Activated CD4-positive, alpha-beta memory T cell treated with anti-CD3 and anti-CD28 coated beads for 36 hours (primary cell): ENCODE measurements at regions of chr10 and their contacts with region 1.

Region 1: GRCh38 chr10:77641788-77642397 is 4.3 kb upstream of the KCNMA1 start:
- DNase-seq: peak; percentile 38
- H3K4me3 Mint-ChIP-seq: no peak overlapping the region
- H3K27ac Mint-ChIP-seq: no peak overlapping the region
- H3K4me1 Mint-ChIP-seq: peaks cover 2% of the 10 kb centered on the region
- H3K27me3 Mint-ChIP-seq: peaks cover 34% of the 10 kb centered on the region

Region 2: DNA sequence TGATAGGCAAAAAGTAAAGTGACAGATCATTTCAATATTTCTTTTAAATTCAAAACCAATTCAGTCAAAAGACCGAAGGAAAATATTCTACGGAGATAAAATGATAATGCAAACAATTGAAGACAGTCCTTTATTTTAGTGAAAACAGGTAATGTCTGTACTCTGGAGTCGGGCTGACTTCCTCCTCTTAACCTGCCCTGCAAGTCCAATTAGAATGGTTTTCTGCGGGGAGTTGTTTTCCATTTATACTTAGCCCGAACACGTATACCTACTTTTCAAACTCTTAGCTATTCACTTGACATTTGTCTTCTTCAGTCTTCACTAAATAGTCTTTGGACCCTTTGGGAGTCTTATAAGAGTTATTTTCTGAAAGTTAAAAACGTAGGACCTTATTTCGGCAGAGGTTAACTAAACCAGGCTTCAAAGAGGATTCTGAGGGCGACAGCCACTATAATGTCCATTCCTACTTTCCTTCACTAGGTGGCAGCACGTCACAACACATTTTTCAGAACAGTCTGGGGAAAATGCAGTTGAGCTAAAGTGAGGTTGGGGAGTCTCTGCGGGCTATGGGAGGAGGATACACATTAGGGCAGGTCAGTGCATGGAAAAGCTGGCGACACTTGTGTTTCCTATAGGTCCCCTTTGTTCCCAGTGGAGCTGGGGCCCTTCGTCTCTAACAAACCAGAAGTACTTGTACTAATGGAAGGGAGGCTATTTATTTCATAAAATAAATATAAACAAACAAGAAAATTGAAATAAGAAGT is 476.3 kb before region 1 on chr10:
- CTCF ChIA-PET with region 1: interaction called, 57 read pairs
- POLR2A ChIA-PET with region 1: no interaction called
- intact Hi-C with region 1: loop called (anchors 1 kb)
- DNase-seq: peak; percentile 50
- H3K4me3 Mint-ChIP-seq: no peak overlapping the region
- H3K27ac Mint-ChIP-seq: no peak overlapping the region
- H3K4me1 Mint-ChIP-seq: peaks cover 3% of the 10 kb centered on the region
- H3K27me3 Mint-ChIP-seq: peaks cover 23% of the 10 kb centered on the region

Region 3: DNA sequence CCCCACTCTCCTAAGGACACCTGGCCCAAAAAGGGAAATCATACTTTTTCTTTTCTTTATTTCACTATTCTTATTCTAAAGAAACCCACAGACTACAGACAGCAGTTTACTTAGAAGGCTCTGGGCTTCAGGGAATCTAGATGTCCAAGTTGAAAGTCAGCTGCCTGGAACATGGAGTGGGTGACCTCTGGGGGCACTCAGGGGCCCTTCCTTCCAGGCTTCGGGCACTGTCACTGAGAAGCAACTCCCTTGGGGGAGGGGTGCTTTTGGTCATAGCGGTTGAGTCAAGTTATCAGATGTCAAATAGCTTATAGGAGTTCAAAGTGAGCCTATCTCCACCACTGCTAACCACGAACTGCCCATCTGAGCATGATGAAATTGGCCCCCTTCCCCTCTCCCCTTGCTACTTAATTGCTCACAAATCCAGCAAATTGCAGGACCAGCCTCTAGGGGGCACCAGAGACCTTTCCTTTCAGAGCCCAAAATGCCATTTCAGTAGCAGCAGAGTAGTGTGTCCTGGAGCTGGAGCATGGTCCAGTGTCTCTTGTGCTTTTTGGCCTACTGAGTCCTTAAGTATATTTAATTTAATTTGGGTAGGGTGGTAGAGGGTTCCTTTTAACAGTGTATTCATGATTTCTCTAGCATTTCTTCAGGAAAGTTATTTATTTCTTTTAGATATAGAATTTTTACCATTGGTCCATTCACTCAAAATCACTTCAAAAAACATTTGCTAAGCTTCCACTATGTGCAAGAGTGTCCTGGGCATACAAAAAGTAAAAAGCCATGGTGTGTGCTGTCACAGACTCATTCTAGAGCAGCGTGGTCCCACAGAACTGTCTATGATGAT is 468.1 kb before region 1 on chr10:
- CTCF ChIA-PET with region 1: interaction called, 51 read pairs
- POLR2A ChIA-PET with region 1: no interaction called
- intact Hi-C with region 1: no loop called
- DNase-seq: peak; percentile 74
- H3K4me3 Mint-ChIP-seq: no peak overlapping the region
- H3K27ac Mint-ChIP-seq: no peak overlapping the region
- H3K4me1 Mint-ChIP-seq: no peaks in the 10 kb centered on the region
- H3K27me3 Mint-ChIP-seq: peaks cover 3% of the 10 kb centered on the region

Region 4: GRCh38 chr10:77391605-77392235 is 250.2 kb before region 1 on chr10:
- CTCF ChIA-PET with region 1: no interaction called
- POLR2A ChIA-PET with region 1: no interaction called
- intact Hi-C with region 1: loop called (anchors 2 kb)
- DNase-seq: peak; percentile 35
- H3K4me3 Mint-ChIP-seq: no peak overlapping the region
- H3K27ac Mint-ChIP-seq: no peak overlapping the region
- H3K4me1 Mint-ChIP-seq: no peaks in the 10 kb centered on the region
- H3K27me3 Mint-ChIP-seq: peaks cover 2% of the 10 kb centered on the region

Region 5: GRCh38 chr10:77537720-77538359 is 104.1 kb before region 1 on chr10:
- CTCF ChIA-PET with region 1: no interaction called
- POLR2A ChIA-PET with region 1: no interaction called
- intact Hi-C with region 1: no loop called
- DNase-seq: no peak
- H3K4me3 Mint-ChIP-seq: no peak overlapping the region
- H3K27ac Mint-ChIP-seq: no peak overlapping the region
- H3K4me1 Mint-ChIP-seq: no peaks in the 10 kb centered on the region
- H3K27me3 Mint-ChIP-seq: no peaks in the 10 kb centered on the region

Region 6: DNA sequence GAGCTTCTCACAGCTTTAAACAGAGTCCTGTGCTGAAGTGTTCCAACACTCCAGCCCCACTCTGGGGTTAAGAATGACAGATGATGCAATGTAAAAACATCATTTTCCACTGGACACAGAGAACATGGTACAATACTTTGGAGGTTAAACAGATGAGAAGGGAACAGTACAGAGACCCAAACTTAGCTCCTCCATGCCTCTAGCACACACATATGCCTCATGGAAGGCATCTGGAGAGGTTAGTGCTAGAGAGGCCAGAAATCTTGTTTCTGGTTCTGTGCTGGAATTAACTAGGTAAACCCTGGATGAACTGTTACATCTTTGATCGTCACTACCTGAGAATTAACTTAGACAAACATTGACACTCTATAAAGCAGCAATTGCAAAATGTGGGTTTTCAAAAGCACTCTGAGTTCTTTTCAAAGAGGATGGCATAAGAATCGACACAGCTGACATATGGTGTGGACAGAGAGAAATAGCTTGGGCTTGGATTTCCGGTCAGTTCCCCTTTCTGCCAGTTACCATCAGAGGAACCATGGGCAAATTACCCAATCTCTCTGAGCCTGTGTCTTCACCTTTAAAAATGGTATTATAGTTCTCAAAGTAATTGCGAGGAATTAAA is 86.2 kb before region 1 on chr10:
- CTCF ChIA-PET with region 1: no interaction called
- POLR2A ChIA-PET with region 1: no interaction called
- intact Hi-C with region 1: no loop called
- DNase-seq: no peak
- H3K4me3 Mint-ChIP-seq: no peak overlapping the region
- H3K27ac Mint-ChIP-seq: no peak overlapping the region
- H3K4me1 Mint-ChIP-seq: no peaks in the 10 kb centered on the region
- H3K27me3 Mint-ChIP-seq: no peaks in the 10 kb centered on the region

Region 7: GRCh38 chr10:77603534-77603927 is 38.4 kb before region 1 on chr10:
- CTCF ChIA-PET with region 1: no interaction called
- POLR2A ChIA-PET with region 1: no interaction called
- intact Hi-C with region 1: no loop called
- DNase-seq: no peak
- H3K4me3 Mint-ChIP-seq: no peak overlapping the region
- H3K27ac Mint-ChIP-seq: no peak overlapping the region
- H3K4me1 Mint-ChIP-seq: no peaks in the 10 kb centered on the region
- H3K27me3 Mint-ChIP-seq: no peaks in the 10 kb centered on the region

Region 8: DNA sequence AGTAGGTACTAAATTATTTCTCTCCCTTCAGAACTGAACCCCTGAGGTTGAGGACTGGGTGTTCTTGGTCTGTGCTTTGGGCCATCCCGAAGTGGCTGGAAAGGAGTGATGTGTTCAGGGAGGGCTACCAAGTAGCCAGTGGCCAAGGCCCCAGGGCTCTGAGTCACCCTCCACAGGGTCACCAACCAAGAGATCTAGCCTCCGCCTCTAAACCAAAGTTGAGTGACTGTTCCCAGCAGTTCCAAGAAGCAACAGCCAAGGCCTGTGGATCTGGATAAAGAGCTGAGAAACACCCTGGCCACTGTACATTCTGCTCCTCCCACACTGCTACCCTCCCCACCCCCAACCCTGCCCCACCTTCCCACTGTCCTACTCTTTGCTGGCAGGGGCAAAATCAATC is 31.2 kb after region 1 on chr10:
- CTCF ChIA-PET with region 1: no interaction called
- POLR2A ChIA-PET with region 1: no interaction called
- intact Hi-C with region 1: no loop called
- DNase-seq: no peak
- H3K4me3 Mint-ChIP-seq: no peak overlapping the region
- H3K27ac Mint-ChIP-seq: no peak overlapping the region
- H3K4me1 Mint-ChIP-seq: no peaks in the 10 kb centered on the region
- H3K27me3 Mint-ChIP-seq: peaks cover 11% of the 10 kb centered on the region